ENCODE measurements at regions of chr1 and their contacts with region 1.

Region 1: DNA sequence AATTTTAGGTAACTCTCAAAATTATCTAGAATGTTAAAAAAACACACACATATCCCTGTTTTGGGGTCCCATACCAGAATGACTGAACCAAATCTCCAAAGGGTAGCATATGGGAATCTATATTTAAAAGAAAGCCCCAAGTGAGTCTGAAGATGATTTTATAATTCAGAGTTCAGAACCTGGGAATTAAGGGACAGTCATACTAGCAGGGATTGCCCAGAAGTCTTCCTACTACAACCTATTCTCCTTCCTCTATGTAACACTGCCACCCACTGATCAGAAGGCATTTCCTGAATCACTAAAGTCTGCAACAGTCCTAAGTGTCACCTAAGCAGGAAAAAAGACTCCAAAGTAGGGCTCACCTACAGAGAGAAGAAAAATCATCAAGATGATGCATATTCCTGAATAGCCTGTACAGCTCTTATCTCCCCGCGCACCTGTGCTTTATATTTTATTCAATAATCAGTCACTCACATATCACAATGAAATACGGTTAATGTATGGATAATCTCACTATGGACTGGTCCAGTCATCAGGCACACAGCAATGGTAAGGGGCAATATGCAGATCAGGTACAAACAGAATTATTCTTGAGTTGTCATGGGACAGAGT is 4.9 kb downstream of the RGS1 start:
- DNase-seq: no peak
- H3K4me3 ChIP-seq: peak overlapping the region; percentile 37 to 62 (median 41)
- H3K27ac ChIP-seq: peak overlapping the region; percentile 75 to 83 (median 80)
- H3K4me1 ChIP-seq: peaks cover 0 to 51% (median 11%) of the 10 kb centered on the region in 4 donors
- H3K27me3 ChIP-seq: no peaks in the 10 kb centered on the region
- CTCF ChIP-seq: peak in 2 of 4 experiments; percentile 28 to 49
- EP300 ChIP-seq: no peak
- POLR2A ChIP-seq: no peak

Region 2: GRCh38 chr1:192530254-192530653 is 50.2 kb before region 1 on chr1:
- intact Hi-C with region 1: loop called (anchors 2 kb)
- DNase-seq: no peak
- H3K4me3 ChIP-seq: no peak overlapping the region
- H3K27ac ChIP-seq: peak overlapping the region; percentile 74 to 87 (median 84)
- H3K4me1 ChIP-seq: peaks cover 0 to 46% (median 33%) of the 10 kb centered on the region in 4 donors
- H3K27me3 ChIP-seq: no peaks in the 10 kb centered on the region
- CTCF ChIP-seq: no peak
- EP300 ChIP-seq: peak in 2 of 4 donors; percentile 0 to 38
- POLR2A ChIP-seq: no peak

Region 3: GRCh38 chr1:193019442-193020026 is 439.1 kb after region 1 on chr1:
- intact Hi-C with region 1: loop called (anchors 10 kb)
- DNase-seq: no peak
- H3K4me3 ChIP-seq: peak overlapping the region in 1 of 4 donors; percentile 10
- H3K27ac ChIP-seq: peak overlapping the region in 3 of 4 donors; percentile 26 to 63 (median 54)
- H3K4me1 ChIP-seq: peaks cover 0 to 39% (median 17%) of the 10 kb centered on the region in 4 donors
- H3K27me3 ChIP-seq: no peaks in the 10 kb centered on the region
- CTCF ChIP-seq: peak; percentile 20 to 58 (median 46)
- EP300 ChIP-seq: no peak
- POLR2A ChIP-seq: no peak

Region 4: GRCh38 chr1:193087893-193088292 is 507.4 kb after region 1 on chr1:
- intact Hi-C with region 1: no loop called
- DNase-seq: no peak
- H3K4me3 ChIP-seq: no peak overlapping the region
- H3K27ac ChIP-seq: no peak overlapping the region
- H3K4me1 ChIP-seq: no peaks in the 10 kb centered on the region
- H3K27me3 ChIP-seq: no peaks in the 10 kb centered on the region
- CTCF ChIP-seq: no peak
- EP300 ChIP-seq: no peak
- POLR2A ChIP-seq: no peak

Region 5: GRCh38 chr1:193121616-193122593 is 541.4 kb after region 1 on chr1 and contains the start of gene CDC73:
- intact Hi-C with region 1: loop called (anchors 10 kb)
- DNase-seq: peak; percentile 98
- H3K4me3 ChIP-seq: peak within 1 kb of the TSS; percentile 58 to 74 (median 68)
- H3K27ac ChIP-seq: peak within 1 kb of the TSS; percentile 87 to 98 (median 93)
- H3K4me1 ChIP-seq: peaks cover 0 to 42% (median 30%) of the 10 kb centered on the region in 4 donors
- H3K27me3 ChIP-seq: no peaks in the 10 kb centered on the region
- CTCF ChIP-seq: peak; percentile 82 to 99 (median 94)
- EP300 ChIP-seq: peak in 2 of 4 donors; percentile 47 to 49
- POLR2A ChIP-seq: peak; percentile 80
- total RNA-seq, gene CDC73: 45.7 to 72.4 (median 52.2) TPM